ENCODE measurements at regions of chr17 and their contacts with region 1.

Region 1: GRCh38 chr17:57861000-57861789 is 11.4 kb upstream of the MRPS23 start:
- DNase-seq: peak; percentile 39
- CTCF ChIP-seq: no peak

Region 2: GRCh38 chr17:57366558-57367351 is 494.4 kb before region 1 on chr17:
- CTCF ChIA-PET with region 1: no interaction called
- POLR2A ChIA-PET with region 1: no interaction called
- DNase-seq: no peak
- CTCF ChIP-seq: no peak

Region 3: GRCh38 chr17:57406131-57406980 is 454.8 kb before region 1 on chr17:
- CTCF ChIA-PET with region 1: no interaction called
- POLR2A ChIA-PET with region 1: no interaction called
- DNase-seq: no peak
- CTCF ChIP-seq: no peak

Region 4: GRCh38 chr17:57747221-57748017 is 113.8 kb before region 1 on chr17:
- CTCF ChIA-PET with region 1: no interaction called
- POLR2A ChIA-PET with region 1: no interaction called
- DNase-seq: peak; percentile 68
- CTCF ChIP-seq: peak; percentile 73

Region 5: DNA sequence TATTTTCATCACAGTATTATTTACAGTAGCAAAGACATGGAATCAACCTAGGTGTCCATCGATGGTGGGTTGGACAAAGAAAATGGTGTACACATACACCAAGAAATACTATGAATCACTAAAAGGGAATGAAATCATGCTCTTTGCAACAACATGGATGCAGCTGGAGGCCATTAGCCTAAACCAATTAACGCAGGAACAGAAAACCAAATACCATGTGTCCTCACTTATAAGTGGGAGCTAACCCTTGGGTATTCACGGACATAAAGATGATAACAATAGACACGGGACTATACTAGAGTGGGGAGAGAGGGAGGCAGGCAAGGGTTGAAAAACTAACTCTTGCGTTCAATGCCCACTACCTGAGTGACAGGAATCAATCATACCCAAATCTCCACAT is 52.3 kb before region 1 on chr17:
- CTCF ChIA-PET with region 1: no interaction called
- POLR2A ChIA-PET with region 1: no interaction called
- DNase-seq: no peak
- CTCF ChIP-seq: no peak

Region 6: GRCh38 chr17:57833179-57833939 is 27.8 kb before region 1 on chr17:
- CTCF ChIA-PET with region 1: interaction called, 23 read pairs
- POLR2A ChIA-PET with region 1: no interaction called
- DNase-seq: peak; percentile 69
- CTCF ChIP-seq: peak; percentile 90

Region 7: DNA sequence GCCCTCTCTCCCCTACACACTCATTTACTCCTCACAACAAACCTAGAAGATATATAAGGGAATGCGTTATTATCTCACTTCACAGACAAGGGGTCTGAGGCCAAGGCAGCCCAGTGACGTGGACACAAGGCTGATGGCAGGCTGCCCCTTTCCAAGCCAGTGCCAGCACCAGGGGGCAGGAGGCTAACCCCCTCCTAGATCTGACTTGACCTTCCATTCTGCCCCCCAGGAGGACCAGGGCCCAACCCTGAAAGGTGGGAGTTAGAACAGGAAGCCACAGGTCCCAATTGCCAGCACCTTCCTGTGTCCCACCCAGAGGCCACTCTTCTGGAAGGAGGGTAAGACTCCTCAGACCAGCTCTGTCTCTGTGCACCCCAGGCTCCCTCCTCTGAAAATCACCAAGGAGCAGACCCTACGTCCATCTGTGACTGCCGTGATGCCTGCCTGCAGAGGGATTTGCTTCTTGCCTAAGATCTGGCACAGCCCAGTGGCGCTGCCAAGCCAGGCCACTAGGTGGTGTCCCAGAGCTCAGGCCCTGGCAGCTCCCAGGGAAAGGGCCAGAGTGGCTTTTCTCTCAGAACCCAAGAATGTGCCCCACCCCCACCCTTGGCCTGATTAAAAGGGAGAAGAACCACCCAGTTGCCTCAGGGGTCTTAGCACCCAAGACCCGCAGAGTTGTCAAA is 31.1 kb after region 1 on chr17:
- CTCF ChIA-PET with region 1: interaction called, 31 read pairs
- POLR2A ChIA-PET with region 1: no interaction called
- DNase-seq: peak; percentile 88
- CTCF ChIP-seq: peak; percentile 99

Region 8: DNA sequence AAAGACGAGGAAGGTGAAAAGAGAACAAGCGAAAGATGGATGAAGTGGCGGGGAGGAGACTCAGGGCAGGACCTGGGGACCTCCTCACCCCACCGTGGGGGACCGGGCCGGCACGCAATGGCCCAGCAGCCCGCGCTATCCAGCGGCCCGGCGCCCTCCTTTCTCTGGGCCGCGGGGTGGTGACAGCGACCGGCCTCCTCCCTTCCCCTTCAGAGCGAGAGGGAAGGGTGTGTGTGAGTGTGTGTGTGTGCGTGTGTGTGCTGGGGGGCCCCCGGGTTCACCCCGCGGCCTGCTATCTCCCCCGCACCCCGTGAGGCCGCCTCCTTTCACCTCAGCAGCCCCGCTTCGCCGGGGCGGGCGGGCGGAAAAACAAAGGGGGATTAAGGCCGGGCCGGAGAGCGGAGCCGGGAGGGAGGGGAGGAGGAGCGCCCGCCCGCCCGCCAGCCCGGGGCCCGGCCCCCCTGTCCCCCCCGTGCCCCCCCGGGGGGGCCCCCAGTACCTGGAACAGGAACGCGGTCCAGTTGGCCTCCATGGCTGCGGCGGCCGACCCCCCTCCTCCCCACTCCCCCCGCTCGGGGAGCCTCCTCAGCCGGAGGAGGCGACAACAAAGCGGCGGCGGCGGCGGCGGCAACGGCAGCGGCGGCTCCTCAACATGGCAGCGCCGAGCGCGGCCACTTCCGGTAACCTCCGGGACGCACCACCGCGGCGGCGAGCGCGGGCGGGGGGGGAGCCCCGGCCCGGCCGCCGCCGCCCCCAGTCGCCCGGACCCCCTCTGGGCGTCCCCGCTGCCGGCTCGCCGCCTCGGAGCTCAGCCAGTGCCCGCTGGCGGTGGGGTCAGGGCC is 126.6 kb after region 1 on chr17 and contains the start of gene VEZF1:
- CTCF ChIA-PET with region 1: interaction called, 478 read pairs
- POLR2A ChIA-PET with region 1: no interaction called
- DNase-seq: peak; percentile 86
- CTCF ChIP-seq: no peak

Region 9: DNA sequence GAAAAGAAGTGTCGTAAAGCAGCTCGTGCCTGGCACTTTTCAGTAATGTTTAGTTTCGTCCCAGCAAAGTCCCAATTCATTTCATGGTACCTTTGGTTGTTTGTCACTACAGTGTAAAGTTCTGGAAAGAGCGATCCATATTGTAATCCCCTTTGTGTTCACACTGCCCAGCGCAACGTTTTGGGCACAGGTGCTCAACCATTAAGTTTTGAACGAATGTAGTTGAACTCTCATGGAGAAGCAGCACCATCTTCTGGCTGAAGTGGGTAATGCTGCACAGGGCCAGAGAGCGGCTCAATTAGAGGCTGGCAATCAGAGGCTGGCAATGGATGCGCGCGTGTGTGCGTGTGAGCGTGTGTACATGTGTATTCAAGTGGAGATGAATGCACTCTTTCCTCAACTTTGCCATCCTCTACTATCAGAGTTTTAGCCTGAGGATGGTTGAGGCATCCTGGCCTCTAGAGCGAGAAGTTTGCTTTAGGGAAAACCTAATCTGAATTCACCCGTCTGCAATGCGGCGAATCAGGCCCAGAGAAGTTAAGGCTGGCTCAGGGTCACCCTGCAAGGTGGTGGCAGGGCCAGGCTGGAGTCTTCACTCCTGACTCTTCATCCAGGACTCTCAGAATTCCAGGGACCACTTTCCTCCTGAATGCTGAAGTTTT is 251.9 kb after region 1 on chr17:
- CTCF ChIA-PET with region 1: interaction called, 74 read pairs
- POLR2A ChIA-PET with region 1: no interaction called
- DNase-seq: peak; percentile 76
- CTCF ChIP-seq: peak; percentile 95

Measured in GM10248 (cell line).